Naive thymus-derived CD4-positive, alpha-beta T cell (primary cell): ENCODE measurements at regions of chr10 and their contacts with region 1.

Region 1: GRCh38 chr10:25875556-25876165 is 58.4 kb upstream of the MYO3A start:
- DNase-seq: peak; percentile 22 to 65 (median 48)
- ATAC-seq: peak; percentile 76
- H3K4me3 ChIP-seq: no peak overlapping the region
- H3K4me3 Mint-ChIP-seq: no peak overlapping the region
- H3K27ac ChIP-seq: no peak overlapping the region
- H3K27ac Mint-ChIP-seq: no peak overlapping the region
- H3K4me1 ChIP-seq: no peaks in the 10 kb centered on the region
- H3K4me1 Mint-ChIP-seq: no peaks in the 10 kb centered on the region
- H3K27me3 ChIP-seq: no peaks in the 10 kb centered on the region
- H3K27me3 Mint-ChIP-seq: peaks cover 0 to 11% (median 7%) of the 10 kb centered on the region in 5 donors

Region 2: GRCh38 chr10:24664991-24665390 is 1210.7 kb before region 1 on chr10:
- CTCF ChIA-PET with region 1: no interaction called
- POLR2A ChIA-PET with region 1: no interaction called
- intact Hi-C with region 1: no loop called
- DNase-seq: no peak
- ATAC-seq: no peak
- H3K4me3 ChIP-seq: no peak overlapping the region
- H3K4me3 Mint-ChIP-seq: no peak overlapping the region
- H3K27ac ChIP-seq: no peak overlapping the region
- H3K27ac Mint-ChIP-seq: no peak overlapping the region
- H3K4me1 ChIP-seq: no peaks in the 10 kb centered on the region
- H3K4me1 Mint-ChIP-seq: peaks cover 0 to 3% (median 0%) of the 10 kb centered on the region in 7 donors
- H3K27me3 ChIP-seq: no peaks in the 10 kb centered on the region
- H3K27me3 Mint-ChIP-seq: no peaks in the 10 kb centered on the region

Region 3: DNA sequence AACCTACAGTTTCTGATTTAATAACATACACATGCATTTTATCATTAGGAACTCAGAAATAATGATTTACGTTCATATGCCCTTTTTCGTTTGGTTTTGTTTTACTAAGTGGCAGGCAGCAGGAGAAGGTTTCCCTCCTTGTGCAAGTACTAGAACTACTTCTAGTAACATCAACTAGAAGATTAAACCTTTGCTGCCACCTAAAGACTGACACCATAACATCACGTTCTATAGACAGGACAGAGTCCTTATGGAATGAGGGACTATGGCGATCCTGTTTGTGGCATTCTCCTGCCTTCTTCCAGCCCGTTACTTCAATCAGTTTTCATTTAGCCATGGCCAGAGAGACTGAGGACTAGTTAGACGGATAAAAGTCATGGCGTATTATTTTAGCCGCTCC is 394.1 kb after region 1 on chr10:
- CTCF ChIA-PET with region 1: interaction called, 4 read pairs
- POLR2A ChIA-PET with region 1: no interaction called
- intact Hi-C with region 1: loop called in 1 of 2 experiments (anchors 10 kb)
- DNase-seq: no peak
- ATAC-seq: no peak
- H3K4me3 ChIP-seq: no peak overlapping the region
- H3K4me3 Mint-ChIP-seq: no peak overlapping the region
- H3K27ac ChIP-seq: no peak overlapping the region
- H3K27ac Mint-ChIP-seq: no peak overlapping the region
- H3K4me1 ChIP-seq: no peaks in the 10 kb centered on the region
- H3K4me1 Mint-ChIP-seq: no peaks in the 10 kb centered on the region
- H3K27me3 ChIP-seq: peaks cover 0 to 2% of the 10 kb centered on the region in 2 donors
- H3K27me3 Mint-ChIP-seq: peaks cover 5 to 21% (median 15%) of the 10 kb centered on the region in 5 donors

Region 4: DNA sequence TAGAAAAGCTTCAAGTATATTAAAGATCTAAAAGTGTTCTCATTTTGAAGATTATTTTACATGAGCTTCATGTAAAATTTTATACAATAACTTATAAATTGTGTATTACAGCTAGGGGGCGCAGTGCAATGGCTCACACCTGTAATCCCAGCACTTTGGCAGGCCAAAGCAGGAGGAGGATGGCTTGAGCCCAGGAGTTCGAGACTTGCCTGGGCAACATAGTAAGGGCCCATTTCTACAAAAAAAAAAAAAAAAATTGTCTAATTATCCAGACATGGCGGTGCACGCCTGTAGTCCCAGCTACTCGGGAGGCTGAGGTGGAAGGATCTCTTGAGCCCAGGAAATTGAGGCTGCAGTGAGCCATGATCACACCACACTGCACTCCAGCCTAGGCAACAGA is 1348.3 kb after region 1 on chr10:
- CTCF ChIA-PET with region 1: no interaction called
- POLR2A ChIA-PET with region 1: no interaction called
- intact Hi-C with region 1: no loop called
- DNase-seq: peak in 7 of 9 donors; percentile 20 to 60 (median 44)
- ATAC-seq: peak; percentile 71
- H3K4me3 ChIP-seq: no peak overlapping the region
- H3K4me3 Mint-ChIP-seq: no peak overlapping the region
- H3K27ac ChIP-seq: no peak overlapping the region
- H3K27ac Mint-ChIP-seq: peak overlapping the region in 1 of 9 donors; percentile 1
- H3K4me1 ChIP-seq: peaks cover 0 to 36% of the 10 kb centered on the region in 2 donors
- H3K4me1 Mint-ChIP-seq: peaks cover 8 to 20% (median 11%) of the 10 kb centered on the region in 7 donors
- H3K27me3 ChIP-seq: no peaks in the 10 kb centered on the region
- H3K27me3 Mint-ChIP-seq: no peaks in the 10 kb centered on the region